ENCODE measurements at regions of chr1 and their contacts with region 1.

Region 1: GRCh38 chr1:161132410-161133219 is at the start of gene DEDD:
- DNase-seq: peak; percentile 87
- ATAC-seq: peak; percentile 98
- H3K4me3 ChIP-seq: peak within 1 kb of the TSS; percentile 93
- H3K27ac ChIP-seq: peak within 1 kb of the TSS; percentile 79
- H3K4me1 ChIP-seq: peaks cover 3% of the 10 kb centered on the region
- H3K27me3 ChIP-seq: no peaks in the 10 kb centered on the region
- CTCF ChIP-seq: no peak
- EP300 ChIP-seq: peak in 1 of 2 experiments; percentile 51; a peak in 2 of 4 replicates
- POLR2A ChIP-seq: peak; percentile 85
- RAD21 ChIP-seq: no peak
- polyA plus RNA-seq, gene DEDD: 25.5 to 30.0 TPM

Region 2: GRCh38 chr1:161117759-161118581 is 14.6 kb before region 1 on chr1 and contains the starts of genes NIT1 and PFDN2:
- CTCF ChIA-PET with region 1: interaction called, 6 read pairs
- POLR2A ChIA-PET with region 1: interaction called, 24 read pairs
- RAD21 ChIA-PET with region 1: interaction called, 6 read pairs
- SMC1A ChIA-PET with region 1: interaction called, 5 read pairs
- in situ Hi-C with region 1: no loop called
- intact Hi-C with region 1: no loop called
- DNase-seq: peak; percentile 38
- ATAC-seq: peak; percentile 87
- H3K4me3 ChIP-seq: peak within 1 kb of the TSS; percentile 74
- H3K27ac ChIP-seq: peak within 1 kb of the TSS; percentile 90
- H3K4me1 ChIP-seq: peaks cover 19% of the 10 kb centered on the region
- H3K27me3 ChIP-seq: no peaks in the 10 kb centered on the region
- CTCF ChIP-seq: no peak; a peak in 1 of 6 replicates
- EP300 ChIP-seq: no peak
- POLR2A ChIP-seq: peak; percentile 99
- RAD21 ChIP-seq: no peak
- polyA plus RNA-seq, gene NIT1: 43.1 to 54.4 TPM
- polyA plus RNA-seq, gene PFDN2: 30.0 to 59.6 TPM

Region 3: GRCh38 chr1:161153679-161154426 is 21.2 kb after region 1 on chr1 and contains the start of gene UFC1:
- CTCF ChIA-PET with region 1: interaction called, 3 read pairs
- POLR2A ChIA-PET with region 1: interaction called, 16 read pairs
- RAD21 ChIA-PET with region 1: interaction called, 3 read pairs
- SMC1A ChIA-PET with region 1: interaction called, 8 read pairs
- in situ Hi-C with region 1: no loop called
- intact Hi-C with region 1: no loop called
- DNase-seq: peak; percentile 83
- ATAC-seq: peak; percentile 98
- H3K4me3 ChIP-seq: peak within 1 kb of the TSS; percentile 89
- H3K27ac ChIP-seq: peak within 1 kb of the TSS; percentile 98
- H3K4me1 ChIP-seq: peaks cover 10% of the 10 kb centered on the region
- H3K27me3 ChIP-seq: no peaks in the 10 kb centered on the region
- CTCF ChIP-seq: no peak
- EP300 ChIP-seq: no peak
- POLR2A ChIP-seq: peak; percentile 97
- RAD21 ChIP-seq: no peak
- polyA plus RNA-seq, gene UFC1: 225 to 239 TPM